Esophagus muscularis mucosa (tissue), 4 donors: ENCODE measurements at regions of chr17 and their contacts with region 1.

Region 1: DNA sequence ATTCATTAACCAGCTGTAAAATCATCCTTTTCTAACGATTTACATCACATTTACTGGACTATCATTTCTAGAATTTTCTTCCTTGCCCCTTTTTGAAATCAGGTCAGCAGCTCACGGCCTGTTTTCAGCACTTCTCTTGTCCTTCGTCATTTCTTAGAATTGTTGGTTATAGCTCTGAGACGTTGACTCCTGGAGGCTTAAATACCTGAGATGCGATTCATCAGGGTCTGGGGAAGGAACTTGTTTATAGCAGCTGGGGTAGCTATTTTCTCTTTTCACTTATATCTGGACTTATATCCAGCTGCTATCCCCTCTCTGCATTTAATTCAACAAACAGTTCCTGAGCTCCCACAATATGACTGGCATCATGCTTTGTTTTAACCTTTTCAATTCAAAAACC is 338.7 kb upstream of the TNRC6C start:
- DNase-seq: no peak
- H3K4me3 ChIP-seq: no peak overlapping the region
- H3K27ac ChIP-seq: peak overlapping the region in 1 of 4 donors; percentile 38
- H3K4me1 ChIP-seq: peaks cover 11 to 25% (median 18%) of the 10 kb centered on the region in 4 donors
- H3K27me3 ChIP-seq: no peaks in the 10 kb centered on the region
- CTCF ChIP-seq: no peak
- EP300 ChIP-seq: no peak
- POLR2A ChIP-seq: no peak

Region 2: DNA sequence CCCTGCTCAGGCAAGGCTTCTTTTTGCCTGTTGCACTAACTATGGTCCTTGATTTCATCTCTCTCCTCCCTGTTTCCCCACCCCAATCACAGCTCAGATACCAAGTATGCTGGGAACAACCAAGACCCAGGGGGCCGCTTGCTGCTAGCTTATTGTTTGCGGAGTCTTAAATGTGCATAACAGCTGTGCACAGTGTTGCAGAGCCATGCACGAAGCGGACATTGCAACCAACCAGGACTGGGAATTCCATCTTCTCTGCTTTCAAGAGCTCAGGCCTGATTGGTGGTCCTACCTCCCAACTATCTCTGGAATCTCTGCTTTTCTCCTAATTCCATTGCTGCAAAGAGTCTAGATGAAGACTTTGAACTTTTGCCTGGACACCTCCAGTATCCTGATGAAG is 57.4 kb after region 1 on chr17:
- intact Hi-C with region 1: loop called (anchors 5 kb)
- DNase-seq: no peak
- H3K4me3 ChIP-seq: no peak overlapping the region
- H3K27ac ChIP-seq: no peak overlapping the region
- H3K4me1 ChIP-seq: peaks cover 27 to 48% (median 42%) of the 10 kb centered on the region in 4 donors
- H3K27me3 ChIP-seq: no peaks in the 10 kb centered on the region
- CTCF ChIP-seq: no peak
- EP300 ChIP-seq: no peak
- POLR2A ChIP-seq: no peak